WTC11 (cell line): ENCODE measurements at regions of chr11 and their contacts with region 1.

Region 1: GRCh38 chr11:66336234-66337102 is at the start of gene RIN1:
- DNase-seq: peak; percentile 57
- ATAC-seq: peak; percentile 70
- H3K4me3 Mint-ChIP-seq: peak within 1 kb of the TSS; percentile 82
- H3K27ac Mint-ChIP-seq: 0 out of 2 replicates have a peak within 1 kb of the TSS, but pooled peaks have one; percentile 78
- H3K4me1 Mint-ChIP-seq: peaks cover 16% of the 10 kb centered on the region
- H3K27me3 Mint-ChIP-seq: no peaks in the 10 kb centered on the region
- CTCF ChIP-seq: no peak
- total RNA-seq, gene RIN1: 4.7 to 5.5 TPM (median 5.0 TPM) in 3 replicates

Region 2: GRCh38 chr11:66288671-66289547 is 47.6 kb before region 1 on chr11 and contains the start of gene YIF1A:
- CTCF ChIA-PET with region 1: interaction called, 12 read pairs
- POLR2A ChIA-PET with region 1: interaction called, 4 read pairs
- DNase-seq: peak; percentile 98
- ATAC-seq: peak; percentile 95
- H3K4me3 Mint-ChIP-seq: peak within 1 kb of the TSS; percentile 96
- H3K27ac Mint-ChIP-seq: peak within 1 kb of the TSS; percentile 96
- H3K4me1 Mint-ChIP-seq: peaks cover 20% of the 10 kb centered on the region
- H3K27me3 Mint-ChIP-seq: peaks cover 37% of the 10 kb centered on the region
- CTCF ChIP-seq: no peak
- total RNA-seq, gene YIF1A: 86.0 to 86.9 TPM (median 86.4 TPM) in 3 replicates